ENCODE measurements at regions of chr20 and their contacts with region 1.

Region 1: GRCh38 chr20:58839474-58839874 is 11.2 kb downstream of the GNAS-AS1 start:
- DNase-seq: peak in 12 of 14 experiments; percentile 19 to 68 (median 42)
- ATAC-seq: peak; percentile 64
- H3K4me3 ChIP-seq: peak overlapping the region; percentile 19
- H3K4me3 Mint-ChIP-seq: no peak overlapping the region
- H3K27ac ChIP-seq: no peak overlapping the region
- H3K27ac Mint-ChIP-seq: no peak overlapping the region
- H3K4me1 ChIP-seq: peaks cover 11% of the 10 kb centered on the region
- H3K4me1 Mint-ChIP-seq: peaks cover 5% of the 10 kb centered on the region
- H3K27me3 ChIP-seq: peaks cover 19 to 26% of the 10 kb centered on the region in 2 experiments
- H3K27me3 Mint-ChIP-seq: peaks cover 72% of the 10 kb centered on the region
- CTCF ChIP-seq: peak; percentile 20

Region 2: GRCh38 chr20:58481481-58482021 is 357.9 kb before region 1 on chr20:
- CTCF ChIA-PET with region 1: interaction called, 11 read pairs
- POLR2A ChIA-PET with region 1: no interaction called
- intact Hi-C with region 1: loop called in 1 of 2 experiments (anchors 1 kb)
- DNase-seq: peak in 13 of 14 experiments; percentile 4 to 80 (median 54)
- ATAC-seq: no peak
- H3K4me3 ChIP-seq: no peak overlapping the region
- H3K4me3 Mint-ChIP-seq: no peak overlapping the region
- H3K27ac ChIP-seq: no peak overlapping the region
- H3K27ac Mint-ChIP-seq: no peak overlapping the region
- H3K4me1 ChIP-seq: peaks cover 6% of the 10 kb centered on the region
- H3K4me1 Mint-ChIP-seq: no peaks in the 10 kb centered on the region
- H3K27me3 ChIP-seq: no peaks in the 10 kb centered on the region
- H3K27me3 Mint-ChIP-seq: peaks cover 37% of the 10 kb centered on the region
- CTCF ChIP-seq: no peak